Activated B cell treated with CpG ODN at 0.5 μM for 24 hours (primary cell): ENCODE measurements at regions of chr12 and their contacts with region 1.

Region 1: DNA sequence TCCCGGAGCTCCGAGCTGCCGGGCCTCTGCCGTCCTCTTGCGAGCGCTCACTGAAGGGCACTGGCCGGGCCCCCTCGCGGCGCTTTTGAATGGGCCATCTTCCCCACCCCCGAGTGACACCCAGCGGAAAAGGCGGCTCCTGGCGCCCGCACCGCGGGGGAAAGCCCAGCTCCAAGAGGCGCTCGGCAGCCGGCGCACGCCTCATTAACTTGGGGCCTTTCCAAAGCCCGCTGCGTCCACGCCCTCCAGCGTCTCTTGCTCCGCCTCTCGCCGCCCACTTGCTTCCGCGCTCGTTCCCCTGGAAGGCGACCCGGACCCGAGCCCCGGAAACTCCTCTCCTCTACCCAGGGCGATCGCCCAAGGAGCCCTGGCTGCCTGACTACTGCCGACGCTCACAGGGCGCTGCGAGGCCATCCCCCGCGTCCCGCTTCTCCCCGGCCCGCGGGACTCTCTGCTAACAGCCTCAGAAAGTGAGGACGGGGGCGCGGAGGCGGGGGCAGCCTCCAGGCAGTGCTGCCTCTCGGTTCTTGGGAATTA is at the start of gene PHLDA1:
- DNase-seq: peak; percentile 84
- ATAC-seq: peak; percentile 85
- H3K4me3 Mint-ChIP-seq: peak within 1 kb of the TSS; percentile 89
- H3K27ac Mint-ChIP-seq: peak within 1 kb of the TSS; percentile 84
- H3K4me1 Mint-ChIP-seq: peaks cover 22% of the 10 kb centered on the region
- H3K27me3 Mint-ChIP-seq: peaks cover 17% of the 10 kb centered on the region
- CTCF ChIP-seq: no peak
- total RNA-seq, gene PHLDA1: 0.83 and 1.1 TPM in 2 replicates

Region 2: DNA sequence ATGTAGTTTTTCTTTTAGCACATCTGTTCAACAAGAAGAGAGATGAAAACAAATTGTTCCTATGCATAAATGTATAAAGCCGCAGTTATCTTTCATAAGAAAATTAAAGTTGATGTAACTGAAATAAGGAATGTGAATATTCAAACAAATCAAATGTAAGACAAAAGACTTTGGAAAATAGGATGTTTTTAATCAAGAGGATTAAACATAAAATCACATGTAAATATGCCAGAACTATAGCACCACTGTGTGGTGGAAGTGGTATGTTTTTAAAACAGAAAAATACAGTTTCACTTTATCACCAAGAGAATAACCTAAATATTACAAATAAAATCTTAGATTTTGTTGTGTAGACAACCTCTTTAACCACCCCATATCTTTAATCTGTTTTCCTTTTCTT is 741.9 kb before region 1 on chr12:
- CTCF ChIA-PET with region 1: no interaction called
- POLR2A ChIA-PET with region 1: no interaction called
- intact Hi-C with region 1: no loop called
- DNase-seq: no peak
- ATAC-seq: no peak
- H3K4me3 Mint-ChIP-seq: no peak overlapping the region
- H3K27ac Mint-ChIP-seq: no peak overlapping the region
- H3K4me1 Mint-ChIP-seq: no peaks in the 10 kb centered on the region
- H3K27me3 Mint-ChIP-seq: no peaks in the 10 kb centered on the region
- CTCF ChIP-seq: no peak

Region 3: GRCh38 chr12:75480469-75480949 is 551.1 kb before region 1 on chr12 and contains the start of gene GLIPR1:
- CTCF ChIA-PET with region 1: interaction called, 5 read pairs
- POLR2A ChIA-PET with region 1: interaction called, 12 read pairs
- intact Hi-C with region 1: loop called (anchors 1 kb)
- DNase-seq: peak; percentile 40
- ATAC-seq: peak; percentile 79
- H3K4me3 Mint-ChIP-seq: peak within 1 kb of the TSS; percentile 96
- H3K27ac Mint-ChIP-seq: peak within 1 kb of the TSS; percentile 97
- H3K4me1 Mint-ChIP-seq: peaks cover 96% of the 10 kb centered on the region
- H3K27me3 Mint-ChIP-seq: no peaks in the 10 kb centered on the region
- CTCF ChIP-seq: no peak
- total RNA-seq, gene GLIPR1: 44.7 and 45.4 TPM in 2 replicates

Region 4: GRCh38 chr12:75641031-75641780 is 390.4 kb before region 1 on chr12:
- CTCF ChIA-PET with region 1: no interaction called
- POLR2A ChIA-PET with region 1: interaction called, 8 read pairs
- intact Hi-C with region 1: loop called (anchors 2 kb)
- DNase-seq: no peak
- ATAC-seq: peak; percentile 96
- H3K4me3 Mint-ChIP-seq: peak overlapping the region; percentile 26
- H3K27ac Mint-ChIP-seq: peak overlapping the region; percentile 51
- H3K4me1 Mint-ChIP-seq: peaks cover 33% of the 10 kb centered on the region
- H3K27me3 Mint-ChIP-seq: peaks cover under 1% of the 10 kb centered on the region
- CTCF ChIP-seq: no peak

Region 5: GRCh38 chr12:75786070-75786469 is 245.5 kb before region 1 on chr12:
- CTCF ChIA-PET with region 1: no interaction called
- POLR2A ChIA-PET with region 1: no interaction called
- intact Hi-C with region 1: no loop called
- DNase-seq: no peak
- ATAC-seq: no peak
- H3K4me3 Mint-ChIP-seq: no peak overlapping the region
- H3K27ac Mint-ChIP-seq: no peak overlapping the region
- H3K4me1 Mint-ChIP-seq: no peaks in the 10 kb centered on the region
- H3K27me3 Mint-ChIP-seq: peaks cover 8% of the 10 kb centered on the region
- CTCF ChIP-seq: no peak

Region 6: DNA sequence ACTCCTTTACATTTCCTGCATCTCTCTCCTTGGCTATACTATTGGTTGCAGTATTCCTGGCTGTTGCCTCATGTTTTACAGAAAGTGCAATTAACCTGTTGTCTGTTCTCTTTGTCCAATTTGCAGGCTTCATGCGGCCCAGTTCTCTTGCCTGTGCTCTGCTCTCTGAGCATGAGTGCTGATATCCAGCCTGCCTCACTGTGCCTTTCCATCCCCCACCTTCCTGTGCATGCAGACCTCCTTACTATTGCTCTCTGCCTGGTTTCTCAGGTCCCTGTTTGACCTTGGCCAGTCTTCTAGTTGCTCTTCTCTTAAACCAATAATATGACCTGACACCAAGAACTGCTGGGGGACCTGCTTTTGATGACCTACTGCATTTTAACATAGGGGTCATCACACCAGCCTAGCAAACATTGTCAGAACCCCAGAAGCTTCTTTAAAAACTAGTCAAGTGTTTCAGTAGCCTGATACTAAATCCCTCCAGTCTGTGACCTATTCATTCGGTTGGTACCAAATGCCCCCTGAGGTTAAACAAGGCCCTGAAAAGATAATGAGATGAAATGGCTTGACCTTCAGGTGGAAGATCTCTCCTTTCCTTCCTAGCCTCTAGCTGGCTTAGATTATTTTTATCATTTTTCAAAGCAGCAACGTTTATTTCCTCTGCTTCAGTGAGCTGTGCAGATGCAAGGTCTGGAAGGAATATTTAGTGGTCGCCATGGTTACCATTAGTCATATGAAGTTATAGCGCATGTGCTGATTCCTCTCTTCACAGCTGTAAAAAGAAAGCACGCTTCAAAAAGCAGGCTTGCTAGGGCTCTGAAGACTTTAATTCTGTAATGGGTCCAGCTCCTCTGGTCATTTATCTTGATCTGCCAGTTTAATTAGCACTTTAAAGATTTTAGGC is 216.5 kb before region 1 on chr12:
- CTCF ChIA-PET with region 1: interaction called, 4 read pairs
- POLR2A ChIA-PET with region 1: interaction called, 5 read pairs
- intact Hi-C with region 1: loop called (anchors 2 kb)
- DNase-seq: no peak
- ATAC-seq: peak; percentile 82
- H3K4me3 Mint-ChIP-seq: no peak overlapping the region
- H3K27ac Mint-ChIP-seq: no peak overlapping the region
- H3K4me1 Mint-ChIP-seq: peaks cover 13% of the 10 kb centered on the region
- H3K27me3 Mint-ChIP-seq: no peaks in the 10 kb centered on the region
- CTCF ChIP-seq: no peak

Region 7: GRCh38 chr12:75977952-75978671 is 53.5 kb before region 1 on chr12:
- CTCF ChIA-PET with region 1: interaction called, 9 read pairs
- POLR2A ChIA-PET with region 1: interaction called, 30 read pairs
- intact Hi-C with region 1: loop called (anchors 1 kb)
- DNase-seq: peak; percentile 23
- ATAC-seq: peak; percentile 93
- H3K4me3 Mint-ChIP-seq: peak overlapping the region; percentile 11
- H3K27ac Mint-ChIP-seq: peak overlapping the region; percentile 65
- H3K4me1 Mint-ChIP-seq: peaks cover 35% of the 10 kb centered on the region
- H3K27me3 Mint-ChIP-seq: no peaks in the 10 kb centered on the region
- CTCF ChIP-seq: no peak

Region 8: DNA sequence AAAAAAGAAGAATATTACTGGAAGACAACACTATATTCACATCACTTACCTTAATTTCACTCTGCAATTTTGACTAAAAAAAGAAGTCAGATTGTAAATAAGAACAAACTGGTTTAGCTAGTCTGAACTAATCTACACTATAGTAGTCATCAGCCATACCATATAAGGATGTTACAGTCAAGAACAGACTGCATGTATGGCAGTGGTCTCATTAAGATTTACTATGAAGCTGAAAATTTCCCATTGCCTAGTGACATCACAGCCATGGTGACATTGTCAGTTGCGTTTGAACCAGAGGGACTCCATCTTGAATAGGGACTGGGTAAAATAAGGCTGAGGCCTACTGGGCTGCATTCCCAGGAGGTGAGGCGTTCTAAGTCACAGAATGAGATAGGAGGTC is 476.6 kb after region 1 on chr12:
- CTCF ChIA-PET with region 1: no interaction called
- POLR2A ChIA-PET with region 1: interaction called, 6 read pairs
- intact Hi-C with region 1: loop called (anchors 1 kb)
- DNase-seq: no peak
- ATAC-seq: no peak
- H3K4me3 Mint-ChIP-seq: no peak overlapping the region
- H3K27ac Mint-ChIP-seq: no peak overlapping the region
- H3K4me1 Mint-ChIP-seq: peaks cover 48% of the 10 kb centered on the region
- H3K27me3 Mint-ChIP-seq: no peaks in the 10 kb centered on the region
- CTCF ChIP-seq: no peak